ENCODE measurements at regions of chr1 and their contacts with region 1.

Region 1: DNA sequence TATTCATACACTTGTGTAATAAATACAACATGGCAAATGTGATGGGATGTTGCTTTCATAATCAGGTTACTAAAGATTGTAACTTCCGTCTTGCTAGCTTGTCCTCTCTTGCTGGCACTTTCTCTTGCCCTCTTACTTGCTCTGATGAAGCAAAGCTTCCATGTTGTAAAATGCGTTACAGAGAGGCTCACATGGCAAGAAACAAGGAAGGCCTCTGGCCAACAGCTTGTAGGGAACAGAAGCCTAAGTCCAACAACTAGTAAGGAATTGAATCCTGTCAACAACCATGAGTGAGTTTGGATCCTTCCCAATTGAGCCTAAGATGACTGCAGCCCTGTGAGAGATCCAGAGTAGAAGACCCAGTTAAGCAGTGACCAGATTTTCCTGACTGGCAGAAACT is 15.4 kb downstream of the TMED5 start:
- DNase-seq: no peak
- H3K4me3 ChIP-seq: no peak overlapping the region
- H3K27ac ChIP-seq: no peak overlapping the region
- H3K4me1 ChIP-seq: no peaks in the 10 kb centered on the region
- H3K27me3 ChIP-seq: no peaks in the 10 kb centered on the region
- CTCF ChIP-seq: no peak

Region 2: GRCh38 chr1:93129507-93130099 is 35.2 kb before region 1 on chr1:
- CTCF ChIA-PET with region 1: no interaction called
- POLR2A ChIA-PET with region 1: no interaction called
- intact Hi-C with region 1: no loop called
- DNase-seq: no peak
- H3K4me3 ChIP-seq: no peak overlapping the region
- H3K27ac ChIP-seq: no peak overlapping the region
- H3K4me1 ChIP-seq: no peaks in the 10 kb centered on the region
- H3K27me3 ChIP-seq: no peaks in the 10 kb centered on the region
- CTCF ChIP-seq: no peak

Region 3: DNA sequence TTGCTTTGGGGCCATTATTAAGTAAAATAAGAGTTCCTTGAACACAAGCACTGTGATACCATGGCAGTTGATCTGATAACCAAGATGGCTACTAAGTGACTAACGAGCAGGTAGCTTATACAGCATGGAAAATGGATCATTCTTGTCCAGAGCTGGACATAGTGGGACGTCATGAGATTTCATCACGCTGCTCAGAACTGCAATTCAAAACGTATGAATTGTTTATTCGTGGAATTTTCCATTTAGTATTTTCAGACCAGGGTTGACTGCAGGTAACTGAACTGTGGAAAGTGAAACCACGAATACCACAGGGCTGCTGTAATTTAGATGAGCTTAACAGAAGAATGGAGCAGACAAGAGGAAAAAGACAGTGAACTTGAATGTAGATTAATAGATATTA is 54.6 kb after region 1 on chr1:
- CTCF ChIA-PET with region 1: no interaction called
- POLR2A ChIA-PET with region 1: no interaction called
- intact Hi-C with region 1: no loop called
- DNase-seq: no peak
- H3K4me3 ChIP-seq: no peak overlapping the region
- H3K27ac ChIP-seq: no peak overlapping the region
- H3K4me1 ChIP-seq: no peaks in the 10 kb centered on the region
- H3K27me3 ChIP-seq: no peaks in the 10 kb centered on the region
- CTCF ChIP-seq: no peak

Region 4: DNA sequence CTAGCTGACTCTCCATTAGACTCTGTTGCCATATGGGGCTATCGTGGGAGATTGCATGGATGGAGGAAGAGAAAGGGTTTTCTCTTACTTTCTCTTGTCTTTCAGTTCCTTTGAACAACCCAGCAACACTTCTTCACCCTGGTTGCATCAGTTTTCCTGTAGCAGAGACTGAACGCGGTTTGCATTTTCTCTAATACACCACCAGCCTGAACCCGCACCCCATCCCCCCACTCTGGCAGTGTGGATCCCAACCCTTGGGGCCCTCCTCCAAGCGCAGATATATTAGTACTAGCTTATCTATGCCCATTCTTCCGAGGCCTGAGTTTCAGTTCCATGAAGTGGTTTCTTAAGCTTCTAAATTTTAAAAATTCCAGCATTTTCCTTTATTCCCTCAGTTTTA is 193.5 kb after region 1 on chr1:
- CTCF ChIA-PET with region 1: no interaction called
- POLR2A ChIA-PET with region 1: interaction called, 27 read pairs
- intact Hi-C with region 1: no loop called
- DNase-seq: no peak
- H3K4me3 ChIP-seq: no peak overlapping the region
- H3K27ac ChIP-seq: no peak overlapping the region
- H3K4me1 ChIP-seq: no peaks in the 10 kb centered on the region
- H3K27me3 ChIP-seq: no peaks in the 10 kb centered on the region
- CTCF ChIP-seq: no peak

Measured in PC-9 (cell line).